ENCODE measurements at regions of chr12 and their contacts with region 1.

Region 1: DNA sequence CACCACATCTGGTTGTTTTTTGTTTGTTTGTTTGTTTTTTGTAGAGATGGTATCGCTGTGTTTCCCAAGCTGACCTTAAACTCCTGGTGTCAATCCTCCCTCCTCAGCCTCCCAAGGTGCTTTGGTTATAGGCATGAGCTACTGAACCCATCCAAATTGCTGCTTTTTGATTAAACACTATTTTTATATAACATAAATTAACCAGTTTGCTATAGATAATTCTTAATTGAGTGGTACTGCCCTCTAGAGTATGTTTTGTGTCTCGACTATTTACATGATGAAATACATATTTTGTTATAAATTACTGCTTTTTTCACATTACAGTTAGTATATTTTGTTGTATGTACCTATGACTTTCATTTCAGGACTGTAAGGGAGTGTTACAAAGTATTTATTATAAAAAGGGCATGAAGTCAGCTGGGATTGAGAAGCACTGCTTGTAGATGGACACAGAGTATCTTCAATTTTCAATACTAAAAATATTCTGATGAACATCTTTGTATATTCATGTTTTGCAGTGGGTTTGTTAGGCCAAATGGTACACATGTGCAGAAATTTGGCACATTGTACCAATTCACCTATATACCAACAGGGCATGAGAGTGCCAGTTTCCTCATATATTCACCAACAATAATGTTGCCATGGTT is 14.9 kb upstream of the SCAF11 start:
- DNase-seq: peak; percentile 14
- H3K4me3 ChIP-seq: no peak overlapping the region
- H3K27ac ChIP-seq: no peak overlapping the region
- H3K4me1 ChIP-seq: no peaks in the 10 kb centered on the region
- H3K27me3 ChIP-seq: no peaks in the 10 kb centered on the region; the same call in 1 of the 2 replicates
- CTCF ChIP-seq: peak; percentile 64
- EP300 ChIP-seq: no peak
- RAD21 ChIP-seq: peak; percentile 43

Region 2: DNA sequence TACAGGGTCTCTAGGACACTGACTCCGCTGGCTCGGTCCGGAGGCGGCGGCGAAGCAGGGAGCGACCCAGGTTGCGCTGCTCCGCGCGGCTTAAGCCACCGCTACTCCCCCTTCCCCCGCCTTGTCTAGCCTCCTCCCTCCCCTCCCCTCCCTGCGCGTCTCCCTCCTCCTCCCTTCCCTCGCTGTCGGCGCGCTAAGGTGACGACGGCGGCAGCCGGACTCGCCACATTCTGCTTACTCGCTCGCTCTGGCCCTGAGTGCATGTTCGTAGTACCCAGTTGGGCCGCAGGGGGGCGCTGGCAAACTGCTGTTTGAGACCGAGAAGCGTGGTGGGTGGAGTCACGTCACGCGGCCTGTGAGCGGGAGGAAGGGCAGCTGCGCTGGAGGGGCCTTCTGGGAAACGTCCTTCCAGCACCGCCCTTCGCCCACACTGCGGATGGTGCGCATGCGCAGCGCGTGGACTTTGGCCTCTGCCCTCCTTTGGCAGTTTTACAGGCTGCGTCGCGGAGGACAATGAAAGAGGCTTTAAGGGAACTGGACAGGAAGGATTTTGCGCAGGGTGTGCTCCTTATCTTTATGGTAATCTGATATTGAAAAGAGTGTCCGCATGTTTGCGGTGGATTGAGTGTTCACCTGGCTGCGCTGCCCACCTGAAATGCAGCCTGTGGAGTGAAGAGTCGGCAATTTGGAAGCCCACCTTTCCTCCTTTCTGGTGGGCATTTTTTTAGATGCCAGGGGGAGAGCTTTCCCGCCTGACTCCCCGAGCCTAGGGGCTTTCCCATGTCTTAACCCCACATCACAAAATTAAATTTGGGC is 14.6 kb before region 1 on chr12 and contains the start of gene SCAF11:
- CTCF ChIA-PET with region 1: interaction called, 19 read pairs
- POLR2A ChIA-PET with region 1: no interaction called
- DNase-seq: peak; percentile 95
- H3K4me3 ChIP-seq: peak within 1 kb of the TSS; percentile 91 to 94
- H3K27ac ChIP-seq: peak within 1 kb of the TSS; percentile 97 to 98
- H3K4me1 ChIP-seq: peaks cover 7 to 13% of the 10 kb centered on the region in 2 experiments; a peak in 3 of 4 replicates
- H3K27me3 ChIP-seq: no peaks in the 10 kb centered on the region
- CTCF ChIP-seq: peak; percentile 89
- EP300 ChIP-seq: peak; percentile 9 to 65; a peak in 3 of 4 replicates
- RAD21 ChIP-seq: peak; percentile 92
- polyA plus RNA-seq, gene SCAF11: 26.1 and 32.3 TPM in 2 replicates

Measured in SK-N-SH (cell line).